ENCODE measurements at regions of chr10 and their contacts with region 1.

Region 1: DNA sequence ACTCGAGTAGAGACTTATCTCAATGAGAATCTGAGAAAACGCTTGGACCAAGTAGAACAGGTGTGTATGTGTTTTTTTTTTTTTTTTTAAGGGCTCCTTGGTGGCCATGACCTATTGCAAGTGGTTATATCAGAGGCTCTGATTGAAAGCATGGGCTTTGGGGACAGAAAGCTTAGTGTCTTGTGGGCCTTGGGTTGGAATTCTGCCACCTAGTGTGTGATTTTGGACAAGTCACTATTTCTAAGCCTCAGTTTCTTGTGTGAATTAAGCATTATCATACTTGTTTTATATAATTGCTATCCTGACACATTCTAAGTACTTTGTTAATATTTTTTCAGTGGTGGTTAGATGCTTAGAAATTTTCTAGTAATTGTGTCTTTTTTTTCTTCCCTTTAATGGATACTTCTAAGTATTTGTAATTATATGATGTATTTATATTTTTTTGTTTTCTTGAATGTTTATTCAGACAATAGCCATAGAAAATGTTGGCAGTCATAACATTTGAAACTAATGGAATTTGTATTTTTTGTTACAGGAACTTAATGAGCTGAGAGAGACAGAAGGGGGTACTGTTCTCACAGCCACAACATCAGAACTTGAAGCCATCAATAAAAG is 33.1 kb downstream of the SMC3 start:
- DNase-seq: peak; percentile 53
- ATAC-seq: peak; percentile 84
- H3K4me3 Mint-ChIP-seq: no peak overlapping the region
- H3K27ac Mint-ChIP-seq: no peak overlapping the region
- H3K4me1 Mint-ChIP-seq: no peaks in the 10 kb centered on the region
- H3K27me3 Mint-ChIP-seq: no peaks in the 10 kb centered on the region

Region 2: GRCh38 chr10:110151467-110151866 is 449.1 kb before region 1 on chr10:
- CTCF ChIA-PET with region 1: no interaction called
- POLR2A ChIA-PET with region 1: no interaction called
- intact Hi-C with region 1: no loop called
- DNase-seq: no peak
- ATAC-seq: no peak
- H3K4me3 Mint-ChIP-seq: no peak overlapping the region
- H3K27ac Mint-ChIP-seq: no peak overlapping the region
- H3K4me1 Mint-ChIP-seq: peaks cover 7% of the 10 kb centered on the region
- H3K27me3 Mint-ChIP-seq: peaks cover 42% of the 10 kb centered on the region

Region 3: GRCh38 chr10:110311357-110311949 is 289.1 kb before region 1 on chr10:
- CTCF ChIA-PET with region 1: interaction called, 31 read pairs
- POLR2A ChIA-PET with region 1: no interaction called
- intact Hi-C with region 1: loop called (anchors 1 kb)
- DNase-seq: peak; percentile 61
- ATAC-seq: peak; percentile 70
- H3K4me3 Mint-ChIP-seq: no peak overlapping the region
- H3K27ac Mint-ChIP-seq: no peak overlapping the region
- H3K4me1 Mint-ChIP-seq: peaks cover 27% of the 10 kb centered on the region
- H3K27me3 Mint-ChIP-seq: peaks cover 2% of the 10 kb centered on the region

Region 4: DNA sequence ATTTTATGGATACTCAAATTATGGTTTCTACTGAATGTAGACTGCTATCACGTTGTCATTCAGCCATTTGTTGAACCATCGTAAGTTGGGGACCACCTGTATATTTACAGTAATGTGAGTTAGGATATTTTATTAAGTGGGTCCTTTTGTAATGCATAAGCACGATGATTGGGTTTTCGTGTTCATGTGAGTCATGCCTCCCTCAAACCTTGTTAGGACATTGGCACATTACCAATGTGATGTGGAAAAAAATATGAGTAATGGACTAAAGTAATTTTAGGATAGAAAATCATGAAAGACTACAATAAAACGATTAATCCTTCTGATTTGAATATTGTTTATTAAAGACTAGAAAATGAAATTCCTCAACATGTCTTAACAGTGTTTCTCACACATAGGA is 24.4 kb before region 1 on chr10:
- CTCF ChIA-PET with region 1: interaction called, 13 read pairs
- POLR2A ChIA-PET with region 1: no interaction called
- intact Hi-C with region 1: no loop called
- DNase-seq: no peak
- ATAC-seq: peak; percentile 23
- H3K4me3 Mint-ChIP-seq: no peak overlapping the region
- H3K27ac Mint-ChIP-seq: peak overlapping the region; percentile 68
- H3K4me1 Mint-ChIP-seq: peaks cover 39% of the 10 kb centered on the region
- H3K27me3 Mint-ChIP-seq: no peaks in the 10 kb centered on the region

Region 5: DNA sequence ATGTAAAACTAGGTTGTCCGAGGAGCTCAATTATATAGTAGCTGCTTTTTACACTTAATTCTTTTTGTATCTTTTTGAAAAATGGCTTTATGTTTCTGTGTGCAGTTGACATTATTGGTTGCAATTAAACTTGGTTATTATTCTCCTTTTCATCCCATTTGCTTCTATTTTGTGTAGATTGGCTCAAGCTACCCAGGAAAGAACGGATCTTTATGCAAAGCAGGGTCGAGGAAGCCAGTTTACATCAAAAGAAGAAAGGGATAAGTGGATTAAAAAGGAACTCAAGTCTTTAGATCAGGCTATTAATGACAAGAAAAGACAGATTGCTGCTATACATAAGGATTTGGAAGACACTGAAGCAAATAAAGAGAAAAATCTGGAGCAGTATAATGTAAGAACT is 16.6 kb before region 1 on chr10:
- CTCF ChIA-PET with region 1: interaction called, 13 read pairs
- POLR2A ChIA-PET with region 1: no interaction called
- intact Hi-C with region 1: no loop called
- DNase-seq: no peak
- ATAC-seq: no peak
- H3K4me3 Mint-ChIP-seq: no peak overlapping the region
- H3K27ac Mint-ChIP-seq: no peak overlapping the region
- H3K4me1 Mint-ChIP-seq: no peaks in the 10 kb centered on the region
- H3K27me3 Mint-ChIP-seq: no peaks in the 10 kb centered on the region

Region 6: DNA sequence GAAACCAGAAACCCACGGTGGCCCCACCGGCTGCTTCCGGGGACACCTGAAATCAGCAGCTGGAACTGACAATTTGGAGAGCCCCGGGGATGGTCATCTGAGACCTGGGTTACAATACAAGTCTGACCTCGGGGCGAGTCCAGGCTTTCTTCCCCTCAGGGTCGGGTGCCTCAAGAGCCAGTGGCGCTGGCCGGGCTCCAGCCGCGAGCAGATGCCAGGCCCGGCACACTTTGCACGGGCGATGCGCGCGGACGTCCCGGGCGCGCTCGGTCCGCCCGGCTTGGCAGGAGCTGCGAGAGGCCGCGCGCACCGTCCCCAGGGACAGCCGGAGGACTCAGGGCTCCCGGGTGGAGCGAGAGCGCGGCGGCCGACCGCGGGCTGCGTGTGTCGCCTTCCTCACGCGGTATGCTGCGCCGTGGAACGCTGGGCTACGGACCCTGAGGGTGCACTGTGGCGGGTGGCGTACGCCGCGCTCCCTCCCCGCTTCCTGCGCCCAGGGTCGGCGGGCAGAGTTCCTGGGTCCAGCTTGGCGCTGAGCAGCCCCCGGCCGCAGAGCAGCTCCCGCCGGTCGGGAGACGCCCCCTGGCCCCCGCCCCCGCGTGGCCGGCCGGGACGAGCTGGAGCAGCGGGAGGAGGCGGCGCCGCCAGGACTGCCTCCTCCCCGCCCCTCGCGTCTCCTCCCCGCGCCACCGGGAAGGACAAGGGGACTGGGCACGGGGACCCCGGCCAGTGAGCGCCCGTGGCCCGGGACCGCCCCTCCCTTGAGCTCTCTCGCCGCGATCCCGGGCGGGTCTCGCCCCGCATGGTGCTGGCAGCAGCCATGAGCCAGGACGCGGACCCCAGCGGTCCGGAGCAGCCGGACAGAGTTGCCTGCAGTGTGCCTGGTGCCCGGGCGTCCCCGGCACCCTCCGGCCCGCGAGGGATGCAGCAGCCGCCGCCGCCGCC is 43.3 kb after region 1 on chr10 and contains the start of gene RBM20:
- CTCF ChIA-PET with region 1: no interaction called
- POLR2A ChIA-PET with region 1: interaction called, 11 read pairs
- intact Hi-C with region 1: no loop called
- DNase-seq: peak; percentile 40
- ATAC-seq: peak; percentile 36
- H3K4me3 Mint-ChIP-seq: peak within 1 kb of the TSS; percentile 73
- H3K27ac Mint-ChIP-seq: peak within 1 kb of the TSS; percentile 52
- H3K4me1 Mint-ChIP-seq: peaks cover 29% of the 10 kb centered on the region
- H3K27me3 Mint-ChIP-seq: peaks cover 48% of the 10 kb centered on the region
- total RNA-seq, gene RBM20: 0.05 to 0.40 TPM

Region 7: DNA sequence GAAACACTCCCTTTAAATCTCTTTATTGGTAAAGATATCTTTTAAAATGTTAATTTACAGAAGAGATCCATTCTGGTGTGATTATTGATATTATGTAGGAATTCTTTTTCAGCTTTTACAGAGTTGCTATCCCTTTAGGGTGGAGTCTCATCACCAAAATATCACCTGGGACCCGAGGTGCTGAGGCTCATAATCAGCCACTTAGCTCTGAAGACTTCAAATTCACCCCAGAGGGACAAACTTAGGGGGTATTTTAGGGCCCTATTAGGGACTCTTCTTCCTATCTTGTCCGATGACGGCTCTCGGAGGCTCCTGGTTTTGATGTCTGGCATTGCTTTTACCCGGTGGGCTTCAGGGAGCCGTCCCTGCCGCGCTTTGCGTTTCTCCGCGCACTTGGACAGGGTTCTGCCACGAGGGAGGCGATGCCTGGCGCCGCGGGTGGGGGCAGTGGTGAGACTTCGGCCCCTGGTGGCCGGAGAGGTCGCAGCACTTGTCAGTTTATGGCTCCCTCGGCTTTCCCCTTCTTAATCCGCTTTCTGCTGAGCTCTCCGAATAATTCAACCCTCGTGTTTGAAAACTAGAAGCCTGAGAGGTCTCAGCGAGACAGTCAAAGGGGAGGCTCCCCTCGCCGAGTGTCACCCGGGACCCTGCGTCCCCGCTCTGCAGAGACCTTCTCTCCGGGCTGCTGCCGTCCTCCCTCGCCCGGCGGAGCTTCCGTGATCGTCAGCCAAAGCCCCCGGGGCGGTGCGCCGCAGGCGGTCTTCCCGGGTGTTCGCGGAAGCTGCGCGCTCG is 71.4 kb after region 1 on chr10:
- CTCF ChIA-PET with region 1: interaction called, 13 read pairs
- POLR2A ChIA-PET with region 1: interaction called, 3 read pairs
- intact Hi-C with region 1: no loop called
- DNase-seq: peak; percentile 86
- ATAC-seq: peak; percentile 98
- H3K4me3 Mint-ChIP-seq: peak overlapping the region; percentile 76
- H3K27ac Mint-ChIP-seq: peak overlapping the region; percentile 71
- H3K4me1 Mint-ChIP-seq: peaks cover 3% of the 10 kb centered on the region
- H3K27me3 Mint-ChIP-seq: no peaks in the 10 kb centered on the region

Region 8: DNA sequence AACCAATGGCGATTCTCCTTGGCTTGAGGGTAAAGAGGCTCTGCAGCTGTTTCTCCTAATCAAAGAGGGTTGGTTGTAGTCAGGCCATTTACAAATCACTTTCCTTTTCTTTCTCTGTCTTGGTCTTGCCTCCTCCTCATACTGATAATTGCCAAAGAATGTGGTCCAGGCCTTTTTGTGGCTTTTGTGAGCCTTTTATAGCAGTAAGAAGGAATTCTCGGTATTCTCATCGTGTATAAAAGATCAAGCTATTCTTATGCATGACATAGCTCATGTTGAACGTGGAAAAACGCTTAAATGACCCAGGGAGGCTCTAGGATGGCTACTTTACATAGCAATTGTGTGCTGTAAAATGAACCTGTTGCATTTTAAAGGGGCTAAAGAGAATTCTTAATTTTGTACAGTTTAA is 106.1 kb after region 1 on chr10:
- CTCF ChIA-PET with region 1: no interaction called
- POLR2A ChIA-PET with region 1: no interaction called
- intact Hi-C with region 1: no loop called
- DNase-seq: no peak
- ATAC-seq: no peak
- H3K4me3 Mint-ChIP-seq: no peak overlapping the region
- H3K27ac Mint-ChIP-seq: no peak overlapping the region
- H3K4me1 Mint-ChIP-seq: no peaks in the 10 kb centered on the region
- H3K27me3 Mint-ChIP-seq: no peaks in the 10 kb centered on the region

Region 9: DNA sequence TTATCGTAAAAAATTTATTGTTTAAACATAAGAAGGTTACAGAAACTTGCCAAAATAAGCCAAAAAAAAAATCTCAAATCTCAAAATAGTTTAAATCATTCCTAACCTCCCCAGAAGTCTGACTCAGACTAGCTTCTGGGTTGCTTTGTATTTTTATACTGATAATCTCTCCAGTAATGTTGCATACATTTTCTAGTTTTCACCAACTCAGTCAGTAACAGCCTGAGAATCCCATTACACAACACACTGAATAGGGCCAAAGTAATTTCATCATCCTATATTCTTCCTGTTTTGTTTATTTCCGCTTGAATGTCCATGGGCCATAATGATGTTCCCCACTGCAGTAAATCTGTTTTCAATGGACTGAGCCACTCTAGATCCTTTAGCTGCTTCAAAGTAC is 1104.4 kb after region 1 on chr10:
- CTCF ChIA-PET with region 1: no interaction called
- POLR2A ChIA-PET with region 1: no interaction called
- intact Hi-C with region 1: no loop called
- DNase-seq: no peak
- ATAC-seq: no peak
- H3K4me3 Mint-ChIP-seq: no peak overlapping the region
- H3K27ac Mint-ChIP-seq: no peak overlapping the region
- H3K4me1 Mint-ChIP-seq: no peaks in the 10 kb centered on the region
- H3K27me3 Mint-ChIP-seq: peaks cover 2% of the 10 kb centered on the region

Measured in activated CD4-positive, alpha-beta T cell treated with anti-CD3 and anti-CD28 coated beads for 36 hours (primary cell).